ENCODE measurements at regions of chr2 and their contacts with region 1.

Region 1: GRCh38 chr2:205776139-205776538 is 93.8 kb downstream of the NRP2 start:
- DNase-seq: peak; percentile 53
- H3K4me3 Mint-ChIP-seq: no peak overlapping the region
- H3K27ac Mint-ChIP-seq: no peak overlapping the region
- H3K4me1 Mint-ChIP-seq: peaks cover 8% of the 10 kb centered on the region
- H3K27me3 Mint-ChIP-seq: peaks cover 43% of the 10 kb centered on the region

Region 2: DNA sequence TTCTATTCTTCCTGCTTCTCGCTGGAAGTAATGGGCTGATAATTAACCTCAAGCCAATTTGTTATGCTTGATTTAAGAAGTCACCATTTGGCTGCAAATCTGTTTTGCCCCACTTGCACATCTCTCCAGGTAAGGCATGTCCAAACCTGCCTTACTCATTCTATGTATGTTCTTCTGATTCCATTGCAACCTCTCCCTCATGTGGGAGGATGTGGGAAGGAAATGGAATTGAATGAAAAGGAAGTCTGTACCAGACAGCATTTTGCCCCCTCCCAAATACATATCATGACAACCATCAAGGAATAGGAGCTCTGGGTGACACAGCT is 37.9 kb after region 1 on chr2:
- CTCF ChIA-PET with region 1: interaction called, 29 read pairs
- DNase-seq: no peak
- H3K4me3 Mint-ChIP-seq: no peak overlapping the region
- H3K27ac Mint-ChIP-seq: no peak overlapping the region
- H3K4me1 Mint-ChIP-seq: no peaks in the 10 kb centered on the region
- H3K27me3 Mint-ChIP-seq: peaks cover 6% of the 10 kb centered on the region

Region 3: DNA sequence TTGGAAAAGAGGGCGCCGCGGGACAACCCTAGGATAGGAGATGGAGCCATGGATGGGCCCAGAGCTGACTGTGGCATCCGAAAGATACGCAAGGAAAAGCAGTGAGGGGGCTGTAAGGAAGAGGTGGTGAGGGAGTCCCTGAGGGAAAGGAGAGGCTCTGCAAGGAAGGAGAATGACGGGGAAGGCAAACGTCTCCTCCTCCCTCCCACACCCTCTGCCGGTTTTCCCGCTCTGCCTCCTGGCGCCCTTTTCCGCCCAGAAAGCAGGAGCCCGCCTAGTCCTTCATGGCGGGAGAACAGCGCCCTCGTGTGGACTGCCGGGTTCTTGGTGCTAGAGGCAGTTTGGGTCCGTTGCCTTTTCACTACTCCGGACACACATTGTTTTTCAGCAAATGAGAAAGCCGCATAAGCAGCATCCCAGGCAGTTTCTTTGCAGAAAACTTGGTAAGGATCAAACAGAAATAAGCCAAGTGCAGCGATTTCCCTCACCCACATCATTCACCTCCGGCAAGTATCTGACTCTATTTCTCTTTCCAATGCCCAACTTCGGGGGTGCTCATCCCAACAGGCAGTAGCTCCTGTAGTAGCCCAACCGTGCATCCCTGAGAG is 109.5 kb after region 1 on chr2:
- CTCF ChIA-PET with region 1: interaction called, 27 read pairs
- DNase-seq: peak; percentile 80
- H3K4me3 Mint-ChIP-seq: no peak overlapping the region
- H3K27ac Mint-ChIP-seq: peak overlapping the region; percentile 38
- H3K4me1 Mint-ChIP-seq: no peaks in the 10 kb centered on the region
- H3K27me3 Mint-ChIP-seq: peaks cover 29% of the 10 kb centered on the region

Region 4: GRCh38 chr2:205925373-205926337 is 149.5 kb after region 1 on chr2:
- CTCF ChIA-PET with region 1: interaction called, 11 read pairs
- DNase-seq: peak; percentile 78
- H3K4me3 Mint-ChIP-seq: no peak overlapping the region
- H3K27ac Mint-ChIP-seq: no peak overlapping the region
- H3K4me1 Mint-ChIP-seq: peaks cover 6% of the 10 kb centered on the region
- H3K27me3 Mint-ChIP-seq: peaks cover 71% of the 10 kb centered on the region

Measured in activated naive CD4-positive, alpha-beta T cell treated with anti-CD3 and anti-CD28 coated beads, Interleukin-2, amount 10 ng/mL, durations not matched to agents 7 days and 5 days (primary cell).